ENCODE measurements at regions of chr2 and their contacts with region 1.

Region 1: DNA sequence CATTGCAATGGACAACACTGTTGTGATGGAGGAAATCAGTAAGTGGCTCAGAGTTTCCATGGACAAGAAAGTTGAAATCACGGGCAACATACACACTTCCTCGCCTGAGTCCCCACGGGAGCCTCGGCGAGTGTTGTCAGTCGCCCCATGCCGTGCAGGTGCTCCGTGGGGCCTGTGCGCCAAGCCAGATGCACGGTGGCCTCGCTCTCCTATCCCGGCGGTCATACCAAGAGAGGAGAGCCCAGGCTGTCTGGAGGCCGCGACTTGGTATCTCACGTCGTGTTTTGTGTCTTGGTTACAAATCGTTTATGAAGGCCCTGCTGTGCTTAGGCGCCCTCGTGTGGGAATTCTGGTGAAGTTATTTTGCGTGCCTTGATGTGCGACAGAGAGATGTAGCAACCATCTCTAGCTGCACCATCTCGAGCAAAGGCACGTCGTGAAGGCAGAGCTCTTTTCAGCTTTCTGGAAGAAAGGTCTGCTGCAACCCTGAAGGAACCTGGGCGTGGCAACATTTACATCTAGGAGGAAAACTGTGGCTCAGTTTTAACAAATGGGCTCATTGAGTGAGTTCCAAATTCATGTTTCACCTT is 21.8 kb downstream of the ATG4B start:
- H3K4me3 ChIP-seq: no peak overlapping the region
- H3K27ac ChIP-seq: no peak overlapping the region
- H3K4me1 ChIP-seq: no peaks in the 10 kb centered on the region
- CTCF ChIP-seq: peak; percentile 72

Region 2: DNA sequence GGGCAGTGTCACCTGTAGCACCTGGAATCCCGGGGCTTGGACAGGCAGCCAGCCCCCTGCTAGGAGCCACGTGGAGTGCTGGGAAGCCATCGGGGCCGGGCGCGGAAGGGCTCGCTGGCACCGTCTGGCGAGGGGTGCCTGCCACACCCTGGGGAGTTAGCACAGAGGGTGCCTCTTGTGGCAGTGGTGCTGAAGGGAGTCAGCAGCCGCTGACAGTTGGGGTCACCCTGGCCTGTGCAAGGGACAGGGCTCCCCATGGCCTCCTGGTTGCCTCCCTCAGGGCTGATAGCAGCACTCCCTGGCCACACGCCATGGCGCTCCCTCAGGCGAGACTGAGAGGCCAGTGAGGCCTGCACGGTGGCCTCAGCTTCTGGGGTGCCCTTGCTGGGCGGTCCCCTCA is 61.3 kb after region 1 on chr2:
- CTCF ChIA-PET with region 1: no interaction called
- POLR2A ChIA-PET with region 1: interaction called, 10 read pairs
- H3K4me3 ChIP-seq: no peak overlapping the region
- H3K27ac ChIP-seq: no peak overlapping the region
- H3K4me1 ChIP-seq: no peaks in the 10 kb centered on the region
- CTCF ChIP-seq: no peak